Heart left ventricle (tissue), 16 donors: ENCODE measurements at regions of chr10 and their contacts with region 1.

Region 1: DNA sequence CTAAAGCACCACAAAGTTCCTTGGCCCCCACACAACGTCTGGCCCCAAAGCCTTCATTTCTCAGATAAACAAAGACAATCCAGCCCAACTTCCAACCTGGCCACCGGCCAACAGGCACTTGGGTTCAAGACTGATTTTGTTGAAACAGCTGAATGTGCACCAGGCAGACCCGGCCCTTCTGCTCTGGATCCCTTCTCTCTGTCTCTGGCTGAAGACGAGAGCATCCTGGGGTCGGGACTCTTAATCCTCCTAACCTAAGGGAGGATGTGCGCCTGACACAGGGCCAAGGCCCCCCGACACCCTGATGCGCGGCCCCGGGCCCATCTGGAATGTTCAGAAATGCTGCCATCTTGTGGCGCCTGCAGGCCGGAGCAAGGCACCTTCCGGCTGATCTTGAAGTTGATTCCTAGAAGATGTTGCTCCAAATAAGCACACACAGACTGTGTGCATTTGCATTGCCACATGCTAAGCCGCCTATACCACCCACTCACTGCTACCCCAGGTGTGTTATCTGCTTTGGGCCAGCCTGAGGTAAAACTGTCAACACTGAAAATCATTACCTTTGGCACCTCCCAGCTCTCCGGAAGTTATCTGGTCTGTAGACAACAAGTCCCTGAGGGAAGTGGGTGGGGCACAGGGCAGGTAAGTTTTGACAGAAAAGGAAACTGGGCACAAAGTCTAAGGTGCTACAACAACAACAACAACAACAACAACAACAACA is 98.4 kb upstream of the HABP2 start:
- DNase-seq: peak in 4 of 5 donors; percentile 24 to 68 (median 34)
- ATAC-seq: peak; percentile 33 to 59 (median 48)
- H3K4me3 ChIP-seq: peak overlapping the region in 3 of 12 donors; percentile 10 to 26 (median 15)
- H3K27ac ChIP-seq: no peak overlapping the region
- H3K4me1 ChIP-seq: peaks cover 0 to 6% (median 0%) of the 10 kb centered on the region in 12 donors
- H3K27me3 ChIP-seq: peaks cover 0 to 14% (median 0%) of the 10 kb centered on the region in 9 donors
- CTCF ChIP-seq: peak; percentile 38 to 74 (median 56)
- POLR2A ChIP-seq: no peak

Region 2: GRCh38 chr10:112792487-112793201 is 661.9 kb before region 1 on chr10:
- intact Hi-C with region 1: loop called in 1 of 10 experiments (anchors 5 kb)
- DNase-seq: peak in 3 of 5 donors; percentile 18 to 58 (median 55)
- ATAC-seq: peak; percentile 73 to 89 (median 80)
- H3K4me3 ChIP-seq: peak overlapping the region in 4 of 12 donors; percentile 5 to 17 (median 14)
- H3K27ac ChIP-seq: peak overlapping the region in 1 of 12 donors; percentile 6
- H3K4me1 ChIP-seq: peaks cover 0 to 9% (median 3%) of the 10 kb centered on the region in 12 donors
- H3K27me3 ChIP-seq: no peaks in the 10 kb centered on the region
- CTCF ChIP-seq: no peak
- POLR2A ChIP-seq: no peak

Region 3: DNA sequence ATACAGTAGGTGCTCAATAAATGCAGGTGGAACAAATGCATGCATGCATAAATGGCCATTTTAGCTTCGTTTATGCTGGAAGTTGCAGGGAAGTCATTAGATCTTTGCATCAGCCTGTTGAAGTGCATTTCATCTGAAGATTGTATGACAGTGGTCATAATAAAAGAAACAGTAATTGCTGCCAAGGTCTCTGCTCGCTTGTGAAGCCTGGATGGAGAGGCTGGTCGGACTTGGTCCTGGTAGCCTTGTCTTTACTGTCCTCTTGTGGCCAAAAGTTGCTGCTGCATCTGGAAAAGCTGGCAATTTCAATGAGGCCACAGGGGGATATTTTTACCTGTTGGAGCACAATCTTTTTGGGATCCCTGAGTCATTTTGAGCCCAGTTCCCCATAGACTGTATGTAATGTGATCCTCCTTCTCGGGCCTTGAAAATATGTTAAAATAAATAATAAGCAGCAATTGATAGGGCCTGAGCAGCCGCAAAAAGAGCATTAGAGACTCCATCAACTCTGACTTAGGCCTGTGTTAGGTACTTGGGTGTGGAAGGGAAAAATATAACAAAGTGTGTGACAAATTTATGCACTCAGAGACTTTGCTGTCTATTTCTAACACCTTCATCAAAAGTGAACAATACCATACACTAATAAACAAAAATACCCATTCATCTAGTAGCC is 66.8 kb after region 1 on chr10:
- intact Hi-C with region 1: loop called in 1 of 10 experiments (anchors 10 kb)
- DNase-seq: peak in 4 of 5 donors; percentile 60 to 75 (median 68)
- ATAC-seq: peak; percentile 79 to 90 (median 83)
- H3K4me3 ChIP-seq: no peak overlapping the region
- H3K27ac ChIP-seq: no peak overlapping the region
- H3K4me1 ChIP-seq: peaks cover 0 to 7% (median 0%) of the 10 kb centered on the region in 12 donors
- H3K27me3 ChIP-seq: no peaks in the 10 kb centered on the region
- CTCF ChIP-seq: peak; percentile 84 to 97 (median 93)
- POLR2A ChIP-seq: no peak